ENCODE measurements at regions of chr4 and their contacts with region 1.

Region 1: GRCh38 chr4:3765271-3766040 is 729 bp upstream of the ADRA2C start:
- DNase-seq: peak; percentile 45 to 76
- ATAC-seq: peak; percentile 66 to 88 (median 82)
- H3K4me3 ChIP-seq: peak overlapping the region; percentile 60
- H3K27ac ChIP-seq: peak overlapping the region; percentile 23
- H3K4me1 ChIP-seq: no peaks in the 10 kb centered on the region
- H3K27me3 ChIP-seq: peaks cover 0 to 62% (median 9%) of the 10 kb centered on the region in 3 donors
- CTCF ChIP-seq: peak; percentile 39

Region 2: GRCh38 chr4:3582091-3582475 is 183.4 kb before region 1 on chr4:
- intact Hi-C with region 1: no loop called
- DNase-seq: no peak
- ATAC-seq: no peak
- H3K4me3 ChIP-seq: no peak overlapping the region
- H3K27ac ChIP-seq: no peak overlapping the region
- H3K4me1 ChIP-seq: no peaks in the 10 kb centered on the region
- H3K27me3 ChIP-seq: peaks cover 0 to 4% (median 0%) of the 10 kb centered on the region in 3 donors
- CTCF ChIP-seq: no peak

Region 3: DNA sequence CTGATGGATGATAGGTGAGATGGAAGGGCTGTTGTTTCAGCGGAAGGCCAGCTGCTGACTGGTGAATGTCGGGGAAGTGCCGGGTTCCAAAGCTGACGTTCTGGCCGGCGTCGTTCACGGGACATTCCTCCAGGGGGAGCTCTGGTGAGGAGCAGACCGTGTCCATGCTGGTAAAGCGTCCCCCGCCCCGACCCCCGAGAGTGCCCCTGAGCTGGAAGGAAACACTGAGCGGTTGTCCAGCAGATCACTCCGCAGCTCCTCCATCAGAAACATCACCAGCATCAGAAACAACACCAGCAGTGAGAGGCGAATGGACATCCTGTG is 17.9 kb before region 1 on chr4:
- intact Hi-C with region 1: no loop called
- DNase-seq: no peak
- ATAC-seq: no peak
- H3K4me3 ChIP-seq: no peak overlapping the region
- H3K27ac ChIP-seq: no peak overlapping the region
- H3K4me1 ChIP-seq: no peaks in the 10 kb centered on the region
- H3K27me3 ChIP-seq: peaks cover 0 to 84% (median 15%) of the 10 kb centered on the region in 3 donors
- CTCF ChIP-seq: peak; percentile 21

Region 4: DNA sequence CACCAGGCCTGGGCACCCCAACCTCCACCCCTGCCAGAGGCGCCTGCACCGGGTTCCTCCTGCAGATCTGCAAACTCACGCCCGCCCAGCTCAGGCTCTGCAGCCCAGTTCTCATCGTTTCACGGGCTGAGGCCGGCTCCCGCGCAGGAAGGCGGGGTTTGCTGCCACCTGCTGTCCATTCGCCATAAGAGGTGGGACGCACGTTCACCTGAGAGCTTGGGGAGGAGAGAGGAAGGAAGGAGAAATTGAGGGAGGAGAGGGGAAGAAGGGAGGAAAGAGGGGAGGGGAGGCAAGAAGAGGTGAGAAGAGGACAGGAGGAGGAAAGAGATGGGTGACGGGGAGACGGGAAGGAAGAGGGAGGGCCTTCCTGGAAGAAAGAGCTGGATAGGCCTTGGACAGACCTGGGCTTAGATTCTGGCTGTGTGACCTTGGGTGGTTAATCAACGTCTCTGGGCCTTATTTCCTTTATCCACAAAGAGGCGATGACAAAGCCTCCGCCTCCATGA is 115.2 kb after region 1 on chr4:
- intact Hi-C with region 1: loop called in 1 of 2 experiments (anchors 10 kb)
- DNase-seq: peak; percentile 48 to 79
- ATAC-seq: peak; percentile 80 to 96 (median 88)
- H3K4me3 ChIP-seq: no peak overlapping the region
- H3K27ac ChIP-seq: no peak overlapping the region
- H3K4me1 ChIP-seq: no peaks in the 10 kb centered on the region
- H3K27me3 ChIP-seq: peaks cover 0 to 54% (median 18%) of the 10 kb centered on the region in 3 donors
- CTCF ChIP-seq: peak; percentile 60

Region 5: DNA sequence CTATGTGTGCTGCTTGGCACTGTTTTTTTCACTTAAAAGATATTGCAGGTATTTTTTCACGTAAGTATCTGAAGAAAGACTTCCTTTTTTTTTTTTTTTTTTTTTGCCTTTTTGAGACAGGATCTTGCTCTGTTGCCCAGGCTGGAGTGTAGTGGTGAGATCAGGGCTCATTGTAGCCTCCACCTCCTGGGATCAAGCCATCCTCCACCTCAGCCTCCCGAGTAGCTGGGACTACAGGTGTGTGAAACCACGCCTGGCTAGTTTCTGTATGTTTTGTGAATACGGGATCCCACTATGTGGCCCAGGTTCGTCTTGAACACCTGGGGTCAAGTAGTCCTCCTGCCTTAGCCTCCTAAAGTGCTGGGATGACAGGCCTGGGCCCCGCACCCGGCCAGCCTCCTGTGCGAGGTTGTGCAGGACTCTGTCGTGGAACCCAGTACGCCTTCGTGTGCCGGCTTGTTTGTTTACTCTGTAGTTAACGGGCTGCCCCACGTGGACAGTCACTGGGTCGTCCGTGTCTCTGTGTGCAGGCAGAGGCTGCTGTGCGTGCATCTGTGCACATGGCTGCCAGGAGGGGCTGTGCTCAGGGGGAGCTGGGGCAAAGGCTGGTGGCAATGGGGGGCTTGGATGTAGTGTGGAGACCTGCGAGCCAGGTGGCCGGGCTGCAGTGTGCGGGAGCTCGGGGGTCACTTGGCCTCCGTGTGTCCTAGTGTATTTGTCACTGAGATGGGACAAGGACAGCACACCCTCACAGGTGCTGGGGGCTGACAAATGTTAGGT is 180.2 kb after region 1 on chr4:
- intact Hi-C with region 1: loop called in 1 of 2 experiments (anchors 10 kb)
- DNase-seq: no peak
- ATAC-seq: no peak
- H3K4me3 ChIP-seq: no peak overlapping the region
- H3K27ac ChIP-seq: no peak overlapping the region
- H3K4me1 ChIP-seq: no peaks in the 10 kb centered on the region
- H3K27me3 ChIP-seq: peaks cover 0 to 15% (median 10%) of the 10 kb centered on the region in 3 donors
- CTCF ChIP-seq: no peak

Measured in psoas muscle (tissue), 8 donors.